ENCODE measurements at regions of chr1 and their contacts with region 1.

Region 1: DNA sequence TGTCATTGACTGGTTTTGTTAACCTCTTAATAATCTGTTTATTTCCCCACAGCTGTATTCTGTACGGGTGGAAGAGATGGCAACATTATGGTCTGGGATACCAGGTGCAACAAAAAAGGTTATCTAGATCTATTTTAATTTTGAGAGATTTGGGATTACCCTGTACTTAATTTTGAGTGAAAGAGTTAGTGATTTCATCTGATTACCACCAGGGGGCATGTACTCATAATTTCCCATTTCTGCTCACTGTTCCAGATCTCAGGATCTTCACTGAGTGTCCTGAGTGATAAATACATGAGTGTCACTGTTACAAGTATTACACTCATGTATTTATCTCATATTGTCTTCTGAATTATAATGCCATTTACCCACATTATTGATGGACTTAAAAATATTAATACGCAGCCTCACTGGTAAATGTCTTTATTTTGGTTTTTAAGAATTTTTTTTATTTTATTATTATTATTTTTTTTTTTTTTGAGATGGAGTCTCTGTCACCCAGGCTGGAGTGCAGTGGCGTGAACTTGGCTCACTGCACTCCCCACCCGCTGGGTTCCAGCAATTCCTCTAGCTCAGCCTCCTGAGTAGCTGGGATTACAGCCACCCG is 27.4 kb downstream of the DTL start:
- DNase-seq: peak; percentile 28
- CTCF ChIP-seq: peak; percentile 49

Region 2: DNA sequence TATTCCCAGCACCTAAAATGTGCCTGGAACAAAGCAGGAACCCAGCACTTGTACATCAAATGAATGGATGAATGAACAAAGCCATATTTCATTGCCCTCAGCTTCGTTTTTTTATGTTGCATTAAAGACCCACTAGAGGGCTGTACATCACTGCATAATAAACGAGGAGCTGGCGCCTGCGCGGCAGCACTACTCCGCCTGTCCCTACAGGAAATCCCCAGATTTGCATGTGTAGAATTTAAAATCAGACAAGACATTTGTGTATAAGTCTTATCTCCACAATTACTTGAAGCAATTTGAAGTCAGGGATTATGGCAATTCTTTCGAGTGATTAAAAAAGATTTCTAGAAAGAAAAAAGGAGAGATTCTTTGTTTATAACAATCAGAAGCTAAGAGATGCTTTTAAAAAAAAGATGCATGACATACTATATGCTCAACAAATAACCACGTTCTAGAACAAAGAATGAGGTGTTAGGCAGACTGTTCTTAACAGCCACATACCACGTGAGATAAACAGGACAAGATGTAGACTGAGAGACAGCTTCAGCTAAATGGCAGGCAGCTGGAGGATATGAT is 382.1 kb before region 1 on chr1:
- CTCF ChIA-PET with region 1: interaction called, 10 read pairs
- POLR2A ChIA-PET with region 1: no interaction called
- DNase-seq: peak; percentile 79
- CTCF ChIP-seq: peak; percentile 64

Region 3: GRCh38 chr1:212040629-212041028 is 22.3 kb before region 1 on chr1:
- CTCF ChIA-PET with region 1: interaction called, 34 read pairs
- POLR2A ChIA-PET with region 1: no interaction called
- DNase-seq: no peak
- CTCF ChIP-seq: no peak

Region 4: GRCh38 chr1:212045981-212046380 is 17.0 kb before region 1 on chr1:
- CTCF ChIA-PET with region 1: interaction called, 15 read pairs
- POLR2A ChIA-PET with region 1: no interaction called
- DNase-seq: no peak
- CTCF ChIP-seq: no peak

Region 5: DNA sequence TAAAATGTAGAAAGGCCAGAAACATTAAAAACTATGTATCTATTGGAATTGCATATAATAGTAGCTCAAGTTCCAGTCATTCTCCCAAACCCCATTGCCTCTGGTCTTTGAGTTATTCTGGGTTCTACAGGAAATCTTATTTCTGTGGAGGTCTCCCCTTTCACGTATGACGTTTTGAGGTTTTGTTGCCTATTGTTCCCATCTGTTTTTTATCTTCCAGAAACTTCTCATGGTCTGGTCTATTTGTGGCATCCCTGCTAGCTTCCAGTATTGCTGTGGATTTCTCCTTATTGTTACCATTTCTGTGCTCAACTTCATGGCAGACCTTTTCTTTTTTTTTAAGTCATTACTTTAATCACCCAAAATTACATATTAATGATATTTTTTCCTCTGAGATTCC is 15.9 kb after region 1 on chr1:
- CTCF ChIA-PET with region 1: interaction called, 20 read pairs
- POLR2A ChIA-PET with region 1: no interaction called
- DNase-seq: no peak
- CTCF ChIP-seq: no peak

Region 6: GRCh38 chr1:212291505-212292134 is 228.7 kb after region 1 on chr1:
- CTCF ChIA-PET with region 1: interaction called, 13 read pairs
- POLR2A ChIA-PET with region 1: no interaction called
- DNase-seq: peak; percentile 37
- CTCF ChIP-seq: peak; percentile 68

Region 7: GRCh38 chr1:212368073-212368484 is 305.1 kb after region 1 on chr1:
- CTCF ChIA-PET with region 1: interaction called, 12 read pairs
- POLR2A ChIA-PET with region 1: no interaction called
- DNase-seq: peak; percentile 67
- CTCF ChIP-seq: peak; percentile 56

Measured in GM10248 (cell line).